Esophagus muscularis mucosa (tissue), 4 donors: ENCODE measurements at regions of chr13 and their contacts with region 1.

Region 1: DNA sequence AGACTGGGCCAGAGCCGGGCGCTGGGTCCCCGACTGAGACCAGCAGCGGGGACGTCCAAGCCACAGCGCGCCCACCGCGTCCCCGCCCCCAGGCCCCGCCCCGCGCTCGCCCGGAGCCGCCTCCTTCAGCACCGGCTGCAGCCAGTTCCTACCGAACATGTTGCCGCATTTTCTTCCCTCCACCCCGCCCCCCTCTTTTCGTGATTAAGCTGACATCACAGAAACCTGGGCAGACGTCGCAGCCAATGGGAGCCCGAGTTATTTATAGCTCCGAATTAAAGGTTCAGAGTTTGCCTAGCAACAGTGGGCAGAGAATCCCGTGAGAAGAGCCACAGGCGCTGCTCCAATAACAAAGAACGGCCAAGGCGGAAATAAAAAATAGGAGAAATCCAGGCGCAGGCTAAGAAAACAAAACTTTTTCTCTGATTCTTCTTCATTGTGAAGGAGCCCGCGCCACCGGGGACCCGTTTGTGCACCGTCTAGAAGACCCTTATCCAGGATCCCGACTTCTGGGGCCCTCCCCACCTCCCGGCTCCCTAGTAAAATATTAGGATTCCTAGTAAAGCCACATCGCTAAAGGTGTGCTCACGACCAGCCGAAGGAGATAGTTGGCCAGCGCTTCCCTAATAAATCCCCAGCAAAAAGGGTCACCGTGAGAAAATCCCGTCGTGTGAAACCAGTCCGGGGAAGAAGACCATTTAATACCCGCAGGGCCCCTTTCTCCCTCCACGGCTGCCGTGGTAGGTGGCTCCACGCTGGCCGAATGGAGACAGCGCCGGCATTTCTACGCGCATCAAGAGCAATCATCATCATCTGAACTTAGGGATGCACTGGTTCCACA is 61.7 kb downstream of the SERP2 start:
- DNase-seq: peak; percentile 99
- H3K4me3 ChIP-seq: peak overlapping the region; percentile 61 to 86 (median 82)
- H3K27ac ChIP-seq: peak overlapping the region; percentile 84 to 92 (median 90)
- H3K4me1 ChIP-seq: peaks cover 20 to 50% (median 43%) of the 10 kb centered on the region in 4 donors
- H3K27me3 ChIP-seq: no peaks in the 10 kb centered on the region
- CTCF ChIP-seq: no peak
- EP300 ChIP-seq: no peak
- POLR2A ChIP-seq: peak; percentile 48

Region 2: DNA sequence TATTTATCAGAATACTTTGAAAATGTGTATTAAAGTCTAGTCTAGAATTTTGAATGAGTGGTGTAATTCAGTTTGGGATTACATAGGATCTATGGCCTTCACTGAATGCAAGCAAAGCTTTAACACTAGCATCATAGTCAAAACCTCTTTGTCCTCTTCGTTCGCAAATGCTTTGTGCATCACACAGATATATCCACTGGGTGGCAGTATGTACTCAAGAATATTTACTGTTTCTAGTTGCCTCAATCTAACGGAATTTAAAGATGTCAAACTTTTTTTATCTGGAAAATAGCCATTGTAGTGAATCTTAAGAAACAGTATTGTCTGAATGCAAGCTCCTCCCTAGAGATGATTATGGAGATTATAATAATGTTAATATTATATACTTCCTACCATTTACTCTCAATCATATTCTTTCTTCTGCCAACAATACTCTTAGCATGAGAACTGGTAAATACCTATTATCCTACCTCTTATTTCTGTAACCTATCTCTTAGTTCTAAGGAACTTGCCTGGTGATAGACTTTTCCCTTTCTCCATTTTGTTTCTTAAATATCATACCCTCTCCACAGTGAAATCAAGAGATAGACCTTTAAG is 529.8 kb before region 1 on chr13:
- intact Hi-C with region 1: loop called (anchors 2 kb)
- DNase-seq: no peak
- H3K4me3 ChIP-seq: no peak overlapping the region
- H3K27ac ChIP-seq: no peak overlapping the region
- H3K4me1 ChIP-seq: peaks cover 10 to 25% (median 18%) of the 10 kb centered on the region in 4 donors
- H3K27me3 ChIP-seq: no peaks in the 10 kb centered on the region
- CTCF ChIP-seq: peak; percentile 83 to 88 (median 86)
- EP300 ChIP-seq: no peak
- POLR2A ChIP-seq: no peak

Region 3: GRCh38 chr13:44050450-44051063 is 384.8 kb before region 1 on chr13:
- intact Hi-C with region 1: loop called (anchors 2 kb)
- DNase-seq: no peak
- H3K4me3 ChIP-seq: no peak overlapping the region
- H3K27ac ChIP-seq: peak overlapping the region in 1 of 4 donors; percentile 46
- H3K4me1 ChIP-seq: peaks cover 8 to 35% (median 34%) of the 10 kb centered on the region in 4 donors
- H3K27me3 ChIP-seq: no peaks in the 10 kb centered on the region
- CTCF ChIP-seq: peak; percentile 81 to 86 (median 85)
- EP300 ChIP-seq: no peak
- POLR2A ChIP-seq: no peak

Region 4: GRCh38 chr13:44141725-44142539 is 293.4 kb before region 1 on chr13:
- intact Hi-C with region 1: loop called (anchors 5 kb)
- DNase-seq: peak; percentile 99
- H3K4me3 ChIP-seq: peak overlapping the region; percentile 53 to 67 (median 60)
- H3K27ac ChIP-seq: peak overlapping the region; percentile 81 to 94 (median 86)
- H3K4me1 ChIP-seq: peaks cover 9 to 20% (median 13%) of the 10 kb centered on the region in 4 donors
- H3K27me3 ChIP-seq: no peaks in the 10 kb centered on the region
- CTCF ChIP-seq: peak in 1 of 3 experiments; percentile 22
- EP300 ChIP-seq: no peak
- POLR2A ChIP-seq: peak; percentile 72

Region 5: DNA sequence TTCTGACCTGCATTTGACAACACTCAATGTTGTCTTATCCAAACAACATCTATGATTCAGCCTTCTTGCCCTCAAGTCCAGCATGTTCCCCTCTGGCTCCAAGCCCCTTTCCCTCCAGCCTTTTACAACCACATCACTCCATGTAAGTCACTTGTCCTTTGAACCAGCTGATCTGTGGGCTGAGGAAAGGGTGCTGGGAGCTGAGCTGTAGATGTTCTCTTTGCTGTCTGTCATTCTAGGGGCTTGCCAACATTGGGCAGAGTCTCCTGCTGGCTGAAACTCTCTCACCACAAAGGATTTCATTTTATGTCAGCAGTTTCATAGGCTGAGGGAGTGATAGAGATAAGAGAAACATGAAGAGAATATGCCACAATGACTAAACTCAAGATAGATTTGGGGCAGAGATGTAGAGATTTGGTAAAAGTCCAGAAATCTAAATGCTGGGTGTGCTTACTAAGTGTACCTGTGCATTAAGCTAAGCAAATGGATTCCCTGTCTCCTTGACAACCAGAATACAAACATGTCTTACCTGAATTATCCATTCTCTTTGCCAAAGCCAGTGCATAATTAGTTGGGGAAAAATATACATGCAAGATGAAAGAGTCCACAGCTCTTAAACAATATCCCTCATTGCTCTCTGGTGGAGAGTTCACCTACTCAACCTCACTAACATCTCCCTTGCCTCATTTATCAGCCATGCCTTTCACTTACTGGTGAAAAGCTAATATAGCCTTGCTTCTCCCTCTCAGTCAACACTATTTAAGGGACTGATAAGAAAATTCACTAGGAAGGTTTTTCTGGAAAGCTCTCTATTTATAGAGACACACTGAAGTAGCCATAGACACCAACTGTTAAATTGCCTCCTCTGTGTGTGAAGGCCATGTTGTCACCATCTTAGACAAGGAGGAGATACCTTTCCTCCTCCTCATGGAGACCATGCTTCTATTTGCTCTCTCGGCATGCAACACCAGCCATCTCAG is 237.3 kb before region 1 on chr13:
- intact Hi-C with region 1: loop called (anchors 5 kb)
- DNase-seq: peak; percentile 68
- H3K4me3 ChIP-seq: no peak overlapping the region
- H3K27ac ChIP-seq: peak overlapping the region in 3 of 4 donors; percentile 59 to 65 (median 59)
- H3K4me1 ChIP-seq: peaks cover 20 to 37% (median 35%) of the 10 kb centered on the region in 4 donors
- H3K27me3 ChIP-seq: no peaks in the 10 kb centered on the region
- CTCF ChIP-seq: no peak
- EP300 ChIP-seq: no peak
- POLR2A ChIP-seq: no peak

Region 6: GRCh38 chr13:44312898-44313551 is 122.3 kb before region 1 on chr13:
- intact Hi-C with region 1: loop called (anchors 2 kb)
- DNase-seq: no peak
- H3K4me3 ChIP-seq: no peak overlapping the region
- H3K27ac ChIP-seq: peak overlapping the region in 1 of 4 donors; percentile 8
- H3K4me1 ChIP-seq: peaks cover 26 to 64% (median 56%) of the 10 kb centered on the region in 4 donors
- H3K27me3 ChIP-seq: no peaks in the 10 kb centered on the region
- CTCF ChIP-seq: no peak
- EP300 ChIP-seq: no peak
- POLR2A ChIP-seq: no peak

Region 7: GRCh38 chr13:44364348-44365049 is 70.9 kb before region 1 on chr13:
- intact Hi-C with region 1: loop called (anchors 5 kb)
- DNase-seq: no peak
- H3K4me3 ChIP-seq: no peak overlapping the region
- H3K27ac ChIP-seq: no peak overlapping the region
- H3K4me1 ChIP-seq: peaks cover 4 to 29% (median 13%) of the 10 kb centered on the region in 4 donors
- H3K27me3 ChIP-seq: no peaks in the 10 kb centered on the region
- CTCF ChIP-seq: no peak
- EP300 ChIP-seq: no peak
- POLR2A ChIP-seq: no peak